ENCODE measurements at regions of chr3 and their contacts with region 1.

Region 1: GRCh38 chr3:44976002-44976815 is at the starts of genes EXOSC7 and ZDHHC3:
- DNase-seq: peak; percentile 87
- H3K4me3 ChIP-seq: peak within 1 kb of the TSS; percentile 64 to 99 (median 97)
- H3K27ac ChIP-seq: peak within 1 kb of the TSS; percentile 92
- H3K4me1 ChIP-seq: peaks cover 39% of the 10 kb centered on the region
- H3K27me3 ChIP-seq: no peaks in the 10 kb centered on the region
- CTCF ChIP-seq: peak in 1 of 2 donors; percentile 13
- total RNA-seq, gene EXOSC7: 34.5 to 59.8 TPM
- total RNA-seq, gene ZDHHC3: 85.7 to 106 TPM

Region 2: GRCh38 chr3:44761424-44762169 is 214.6 kb before region 1 on chr3 and contains the starts of genes KIAA1143 and KIF15:
- CTCF ChIA-PET with region 1: no interaction called
- dilution Hi-C with region 1: no loop called
- in situ Hi-C with region 1: no loop called
- intact Hi-C with region 1: loop called (anchors 5 kb)
- DNase-seq: peak; percentile 92
- H3K4me3 ChIP-seq: peak within 1 kb of the TSS; percentile 72 to 97 (median 88)
- H3K27ac ChIP-seq: peak within 1 kb of the TSS; percentile 96
- H3K4me1 ChIP-seq: peaks cover 7% of the 10 kb centered on the region
- H3K27me3 ChIP-seq: no peaks in the 10 kb centered on the region
- CTCF ChIP-seq: peak in 1 of 2 donors; percentile 8
- total RNA-seq, gene KIAA1143: 21.3 to 25.3 TPM
- total RNA-seq, gene KIF15: 0.67 to 7.7 TPM

Region 3: DNA sequence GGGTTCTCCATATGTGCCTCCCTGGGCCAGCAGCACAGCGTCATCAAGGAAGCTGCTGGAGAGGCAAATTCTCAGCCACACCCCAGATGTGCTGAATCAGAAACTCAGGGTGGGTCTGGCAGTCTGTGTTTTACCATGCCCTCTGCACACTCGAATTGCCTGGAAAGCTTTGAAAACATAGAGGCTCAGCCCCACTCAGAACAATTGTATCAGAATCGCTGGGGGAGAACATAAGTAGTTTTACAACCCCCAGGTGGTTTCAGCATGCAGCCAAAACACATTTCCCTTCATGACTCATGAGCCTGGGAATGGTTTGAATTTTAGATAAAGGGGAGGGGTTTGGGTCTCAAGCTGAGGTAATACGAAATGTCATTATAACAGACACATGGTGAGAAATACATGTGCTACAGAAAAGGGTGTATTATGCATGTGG is 92.2 kb before region 1 on chr3:
- CTCF ChIA-PET with region 1: no interaction called
- dilution Hi-C with region 1: loop called (anchors 5 kb)
- in situ Hi-C with region 1: no loop called
- intact Hi-C with region 1: no loop called
- DNase-seq: peak; percentile 97
- H3K4me3 ChIP-seq: no peak overlapping the region
- H3K27ac ChIP-seq: peak overlapping the region; percentile 92
- H3K4me1 ChIP-seq: peaks cover 55% of the 10 kb centered on the region
- H3K27me3 ChIP-seq: no peaks in the 10 kb centered on the region
- CTCF ChIP-seq: no peak

Region 4: GRCh38 chr3:44942202-44942921 is 33.8 kb before region 1 on chr3:
- CTCF ChIA-PET with region 1: no interaction called
- dilution Hi-C with region 1: no loop called
- in situ Hi-C with region 1: no loop called
- intact Hi-C with region 1: loop called (anchors 1 kb)
- DNase-seq: peak; percentile 71
- H3K4me3 ChIP-seq: no peak overlapping the region
- H3K27ac ChIP-seq: peak overlapping the region; percentile 36
- H3K4me1 ChIP-seq: peaks cover 8% of the 10 kb centered on the region
- H3K27me3 ChIP-seq: no peaks in the 10 kb centered on the region
- CTCF ChIP-seq: no peak

Region 5: DNA sequence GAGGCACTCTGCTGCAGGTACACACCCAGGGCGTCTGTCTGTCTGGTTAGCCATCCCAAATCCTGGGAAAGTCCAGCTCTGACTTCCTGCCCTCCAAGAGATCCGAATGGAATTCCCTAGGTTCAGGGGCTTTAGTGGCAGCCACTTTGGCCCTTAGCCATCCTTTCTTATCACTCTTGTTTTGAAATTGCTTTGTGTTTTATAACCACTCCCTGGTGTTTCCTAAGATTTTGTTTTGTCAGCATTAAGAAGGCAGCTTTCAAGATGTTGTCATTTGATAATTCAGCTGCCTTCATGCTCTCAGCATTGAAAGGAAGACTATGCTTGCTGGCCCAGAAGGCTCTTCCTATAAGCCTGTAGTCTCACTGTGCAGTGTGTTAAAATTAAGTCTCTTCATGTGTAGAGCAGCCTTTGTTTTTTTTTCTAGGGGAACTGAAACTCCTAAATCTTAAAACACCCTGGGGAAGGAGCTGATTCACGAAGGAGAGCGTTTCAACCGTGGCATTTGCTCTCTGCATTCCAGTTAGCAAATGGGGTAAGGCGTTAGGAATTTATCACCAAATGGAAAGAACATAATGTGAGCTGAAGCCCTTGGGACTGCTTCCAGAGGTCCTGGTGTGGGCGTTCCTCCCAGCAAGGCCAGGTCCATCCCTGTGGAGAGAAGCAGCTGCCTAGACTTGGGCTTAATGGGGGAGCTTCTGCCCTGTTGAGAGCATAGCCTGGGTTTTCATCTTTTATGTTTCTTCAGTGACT is 35.7 kb after region 1 on chr3:
- CTCF ChIA-PET with region 1: no interaction called
- dilution Hi-C with region 1: no loop called
- in situ Hi-C with region 1: no loop called
- intact Hi-C with region 1: loop called (anchors 1 kb)
- DNase-seq: peak; percentile 63
- H3K4me3 ChIP-seq: peak overlapping the region in 1 of 3 experiments; percentile 8
- H3K27ac ChIP-seq: peak overlapping the region; percentile 62
- H3K4me1 ChIP-seq: peaks cover 36% of the 10 kb centered on the region
- H3K27me3 ChIP-seq: no peaks in the 10 kb centered on the region
- CTCF ChIP-seq: no peak

Measured in mammary epithelial cell (primary cell).